ENCODE measurements at regions of chr14 and their contacts with region 1.

Region 1: GRCh38 chr14:22276913-22277816 is 311.9 kb downstream of the DAD1 start:
- DNase-seq: no peak
- ATAC-seq: no peak
- H3K4me3 Mint-ChIP-seq: no peak overlapping the region
- H3K27ac Mint-ChIP-seq: no peak overlapping the region
- H3K4me1 Mint-ChIP-seq: peaks cover 15% of the 10 kb centered on the region
- H3K27me3 Mint-ChIP-seq: peaks cover 25% of the 10 kb centered on the region
- CTCF ChIP-seq: no peak

Region 2: DNA sequence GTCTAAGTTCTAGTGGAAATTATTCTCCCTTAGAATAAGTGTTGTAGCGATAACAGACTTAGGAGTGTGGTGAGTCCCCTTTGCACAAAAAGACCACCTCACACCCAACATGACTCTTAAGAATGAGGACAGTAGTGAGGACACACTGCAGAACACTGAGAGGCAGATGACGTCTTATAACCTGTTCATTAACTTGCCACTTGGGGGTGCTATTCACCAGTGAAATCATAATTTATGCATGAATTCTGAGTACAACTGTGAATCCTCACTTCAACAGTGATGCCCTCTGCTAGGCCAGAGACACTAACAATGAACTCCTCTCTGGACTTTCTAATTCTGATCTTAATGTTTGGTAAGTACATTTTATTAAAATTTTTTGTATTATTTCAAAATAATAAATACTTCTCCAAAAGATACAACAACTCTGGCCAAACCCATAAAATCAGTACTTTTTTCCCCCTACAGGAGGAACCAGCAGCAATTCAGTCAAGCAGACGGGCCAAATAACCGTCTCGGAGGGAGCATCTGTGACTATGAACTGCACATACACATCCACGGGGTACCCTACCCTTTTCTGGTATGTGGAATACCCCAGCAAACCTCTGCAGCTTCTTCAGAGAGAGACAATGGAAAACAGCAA is 37.1 kb after region 1 on chr14:
- CTCF ChIA-PET with region 1: interaction called, 5 read pairs
- POLR2A ChIA-PET with region 1: no interaction called
- intact Hi-C with region 1: loop called (anchors 5 kb)
- DNase-seq: no peak
- ATAC-seq: peak; percentile 95
- H3K4me3 Mint-ChIP-seq: no peak overlapping the region
- H3K27ac Mint-ChIP-seq: no peak overlapping the region
- H3K4me1 Mint-ChIP-seq: no peaks in the 10 kb centered on the region
- H3K27me3 Mint-ChIP-seq: no peaks in the 10 kb centered on the region
- CTCF ChIP-seq: no peak

Region 3: GRCh38 chr14:22338917-22339715 is 62.0 kb after region 1 on chr14:
- CTCF ChIA-PET with region 1: no interaction called
- POLR2A ChIA-PET with region 1: no interaction called
- intact Hi-C with region 1: no loop called
- DNase-seq: no peak
- ATAC-seq: no peak
- H3K4me3 Mint-ChIP-seq: no peak overlapping the region
- H3K27ac Mint-ChIP-seq: no peak overlapping the region
- H3K4me1 Mint-ChIP-seq: no peaks in the 10 kb centered on the region
- H3K27me3 Mint-ChIP-seq: peaks cover 8% of the 10 kb centered on the region
- CTCF ChIP-seq: no peak

Measured in activated B cell treated with CpG ODN at 0.5 μM for 24 hours (primary cell).